Mammary epithelial cell (primary cell): ENCODE measurements at regions of chr11 and their contacts with region 1.

Region 1: DNA sequence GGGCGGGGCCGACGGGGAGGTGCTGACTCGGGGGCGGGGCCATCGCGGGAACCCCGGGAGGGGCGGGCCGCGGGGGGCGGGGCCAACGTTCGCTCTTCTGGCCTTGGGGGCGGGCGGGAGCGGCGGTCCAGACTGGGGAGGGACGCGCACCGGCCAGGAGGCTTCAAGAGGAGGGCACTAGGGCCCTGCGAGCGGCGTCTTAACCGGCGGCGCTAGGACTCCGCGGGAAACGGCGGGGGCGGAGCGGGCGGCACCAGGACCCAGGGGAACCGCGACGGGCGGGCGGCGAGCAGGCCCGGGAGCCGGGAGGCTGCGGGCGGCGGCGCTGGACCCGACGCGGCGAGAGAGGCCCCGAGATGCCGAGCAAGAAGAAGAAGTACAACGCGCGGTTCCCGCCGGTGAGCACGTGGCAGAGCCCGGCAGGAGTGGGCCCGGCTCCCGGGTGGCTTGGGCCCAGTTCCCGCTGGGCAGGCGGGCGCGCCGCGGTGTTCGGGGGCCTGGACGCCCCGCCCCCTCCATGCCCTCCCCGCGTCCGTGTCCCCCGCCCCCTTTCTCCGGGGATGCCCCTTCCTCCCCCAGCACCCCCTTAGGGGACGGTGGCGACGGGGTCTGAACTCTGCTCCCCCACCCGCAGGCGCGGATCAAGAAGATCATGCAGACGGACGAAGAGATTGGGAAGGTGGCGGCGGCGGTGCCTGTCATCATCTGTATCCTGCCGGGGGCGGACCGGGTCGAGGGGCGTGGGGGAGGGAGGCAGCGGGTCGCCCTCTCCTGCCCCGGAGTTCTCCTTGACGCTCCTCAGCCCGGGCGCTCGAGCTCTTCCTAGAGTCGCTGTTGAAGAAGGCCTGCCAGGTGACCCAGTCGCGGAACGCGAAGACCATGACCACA is at the start of gene DRAP1:
- DNase-seq: peak; percentile 97
- H3K4me3 ChIP-seq: peak within 1 kb of the TSS; percentile 66 to 83 (median 80)
- H3K27ac ChIP-seq: peak within 1 kb of the TSS; percentile 92
- H3K4me1 ChIP-seq: peaks cover 60% of the 10 kb centered on the region
- H3K27me3 ChIP-seq: no peaks in the 10 kb centered on the region
- CTCF ChIP-seq: no peak
- total RNA-seq, gene DRAP1: 121 to 396 TPM

Region 2: DNA sequence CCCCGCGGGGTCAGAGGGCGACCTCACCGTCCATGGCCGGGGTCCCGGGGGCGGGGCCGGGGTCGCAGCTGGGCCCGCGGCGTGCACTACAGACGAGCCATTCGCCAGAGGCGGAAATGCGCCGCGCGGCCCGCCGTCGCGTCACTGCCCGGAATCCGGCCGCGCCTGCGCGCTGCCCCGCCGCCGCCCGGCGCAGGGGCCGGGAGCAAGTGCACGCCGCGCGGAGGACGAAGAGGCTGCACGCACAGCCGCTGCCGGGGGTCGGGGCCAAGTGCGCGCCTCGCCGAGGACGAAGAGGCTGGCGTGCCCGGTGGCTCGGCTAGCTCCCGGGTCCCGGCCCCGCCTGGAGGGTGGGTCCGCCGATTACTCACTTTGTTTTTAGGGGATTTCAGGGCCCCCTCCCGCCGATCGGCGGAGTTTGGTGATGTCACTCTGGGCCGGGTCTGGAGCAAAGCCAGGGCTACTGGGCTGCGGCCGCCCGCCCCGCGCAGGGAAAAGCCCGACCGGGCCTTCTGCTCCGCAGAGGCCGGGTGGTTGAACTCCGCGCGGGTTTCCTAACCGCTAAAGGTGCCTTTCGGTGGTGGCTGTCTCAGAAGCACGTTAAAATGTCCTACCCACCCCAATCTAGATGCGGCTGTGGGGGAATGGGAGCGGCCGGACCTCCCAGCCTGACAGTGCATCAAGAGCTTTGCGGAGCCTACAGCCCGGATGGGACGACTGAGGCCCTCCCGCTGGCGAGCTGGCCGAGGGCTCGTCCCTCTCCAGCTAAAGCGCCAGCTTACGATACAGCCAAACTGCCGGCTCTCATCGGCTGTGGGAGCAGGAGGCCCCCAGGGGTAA is 256.4 kb before region 1 on chr11 and contains the start of gene RELA:
- CTCF ChIA-PET with region 1: no interaction called
- dilution Hi-C with region 1: no loop called
- in situ Hi-C with region 1: no loop called
- intact Hi-C with region 1: loop called (anchors 5 kb)
- DNase-seq: peak; percentile 95
- H3K4me3 ChIP-seq: peak within 1 kb of the TSS; percentile 83 to 94 (median 86)
- H3K27ac ChIP-seq: peak within 1 kb of the TSS; percentile 82
- H3K4me1 ChIP-seq: peaks cover 17% of the 10 kb centered on the region
- H3K27me3 ChIP-seq: no peaks in the 10 kb centered on the region
- CTCF ChIP-seq: no peak
- total RNA-seq, gene RELA: 23.7 to 79.0 TPM

Region 3: GRCh38 chr11:65844231-65845190 is 74.9 kb before region 1 on chr11:
- CTCF ChIA-PET with region 1: no interaction called
- dilution Hi-C with region 1: no loop called
- in situ Hi-C with region 1: no loop called
- intact Hi-C with region 1: no loop called
- DNase-seq: no peak
- H3K4me3 ChIP-seq: no peak overlapping the region
- H3K27ac ChIP-seq: no peak overlapping the region
- H3K4me1 ChIP-seq: no peaks in the 10 kb centered on the region
- H3K27me3 ChIP-seq: no peaks in the 10 kb centered on the region
- CTCF ChIP-seq: no peak

Region 4: DNA sequence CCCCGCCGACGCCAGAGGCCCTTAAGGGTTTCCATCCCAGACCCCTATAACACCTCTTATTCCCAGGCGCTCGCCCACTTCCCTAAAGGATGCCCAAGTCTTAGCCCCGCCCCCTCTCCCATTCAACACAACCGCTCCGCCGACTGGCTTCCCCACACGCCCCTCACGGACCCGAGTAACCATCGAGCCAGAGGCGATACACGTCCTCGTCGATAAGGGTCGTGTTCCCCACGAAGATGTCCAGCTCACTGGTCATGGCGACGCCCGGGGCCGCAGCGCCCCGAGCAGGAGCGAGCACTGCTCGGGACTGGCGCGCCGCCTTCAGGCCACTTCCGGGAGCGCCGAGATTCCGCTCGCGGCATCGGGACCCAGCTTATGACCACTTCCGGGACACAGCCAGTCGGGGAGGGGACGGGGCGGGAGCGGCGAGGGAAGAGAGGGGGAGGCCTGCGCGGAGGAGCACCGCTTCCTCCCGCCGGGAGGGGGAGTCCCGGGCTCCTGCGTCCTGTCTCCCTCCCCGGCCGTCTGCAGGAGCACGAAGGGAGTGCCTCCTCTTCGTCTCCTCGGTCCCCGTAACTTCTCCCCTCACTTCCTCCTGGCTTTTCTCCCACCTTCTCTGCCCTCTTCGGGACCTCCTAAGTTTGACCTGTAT is 31.1 kb before region 1 on chr11 and contains the start of gene FIBP:
- CTCF ChIA-PET with region 1: interaction called, 5 read pairs
- dilution Hi-C with region 1: no loop called
- in situ Hi-C with region 1: no loop called
- intact Hi-C with region 1: loop called (anchors 1 kb)
- DNase-seq: peak; percentile 95
- H3K4me3 ChIP-seq: peak within 1 kb of the TSS; percentile 78 to 89 (median 80)
- H3K27ac ChIP-seq: peak within 1 kb of the TSS; percentile 70
- H3K4me1 ChIP-seq: peaks cover 56% of the 10 kb centered on the region
- H3K27me3 ChIP-seq: no peaks in the 10 kb centered on the region
- CTCF ChIP-seq: peak; percentile 30 to 80
- total RNA-seq, gene FIBP: 84.1 to 125 TPM

Region 5: GRCh38 chr11:65900125-65900898 is 19.1 kb before region 1 on chr11 and contains the start of gene FOSL1:
- CTCF ChIA-PET with region 1: no interaction called
- dilution Hi-C with region 1: no loop called
- in situ Hi-C with region 1: no loop called
- intact Hi-C with region 1: loop called (anchors 1 kb)
- DNase-seq: peak; percentile 99
- H3K4me3 ChIP-seq: peak within 1 kb of the TSS; percentile 68 to 88 (median 83)
- H3K27ac ChIP-seq: peak within 1 kb of the TSS; percentile 86
- H3K4me1 ChIP-seq: peaks cover 58% of the 10 kb centered on the region
- H3K27me3 ChIP-seq: no peaks in the 10 kb centered on the region
- CTCF ChIP-seq: no peak
- total RNA-seq, gene FOSL1: 12.5 to 275 TPM

Region 6: DNA sequence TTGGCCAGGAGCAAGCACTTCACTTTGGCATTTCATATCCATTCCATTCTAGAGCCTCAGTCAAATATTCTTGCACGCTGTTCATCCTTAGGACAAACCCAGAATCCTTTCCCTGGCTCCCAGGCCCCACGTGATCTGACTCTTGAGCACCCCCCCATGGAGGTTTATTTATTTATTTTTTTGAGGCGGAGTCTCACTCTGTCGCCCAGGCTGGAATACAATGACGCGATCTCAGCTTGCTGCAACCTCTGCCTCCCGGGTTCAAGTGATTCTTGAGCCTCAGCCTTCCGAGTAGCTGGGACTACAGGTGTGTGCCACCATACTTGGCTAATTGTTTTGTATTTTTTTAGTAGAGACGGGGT is 13.1 kb after region 1 on chr11:
- CTCF ChIA-PET with region 1: no interaction called
- dilution Hi-C with region 1: no loop called
- in situ Hi-C with region 1: no loop called
- intact Hi-C with region 1: no loop called
- DNase-seq: no peak
- H3K4me3 ChIP-seq: no peak overlapping the region
- H3K27ac ChIP-seq: no peak overlapping the region
- H3K4me1 ChIP-seq: no peaks in the 10 kb centered on the region
- H3K27me3 ChIP-seq: no peaks in the 10 kb centered on the region
- CTCF ChIP-seq: no peak

Region 7: GRCh38 chr11:67240576-67241389 is 1321.4 kb after region 1 on chr11:
- CTCF ChIA-PET with region 1: no interaction called
- dilution Hi-C with region 1: no loop called
- in situ Hi-C with region 1: no loop called
- intact Hi-C with region 1: no loop called
- DNase-seq: peak; percentile 85
- H3K4me3 ChIP-seq: peak overlapping the region; percentile 58 to 85 (median 65)
- H3K27ac ChIP-seq: peak overlapping the region; percentile 96
- H3K4me1 ChIP-seq: peaks cover 24% of the 10 kb centered on the region
- H3K27me3 ChIP-seq: no peaks in the 10 kb centered on the region
- CTCF ChIP-seq: no peak